PC-9 (cell line): ENCODE measurements at regions of chr11 and their contacts with region 1.

Region 1: DNA sequence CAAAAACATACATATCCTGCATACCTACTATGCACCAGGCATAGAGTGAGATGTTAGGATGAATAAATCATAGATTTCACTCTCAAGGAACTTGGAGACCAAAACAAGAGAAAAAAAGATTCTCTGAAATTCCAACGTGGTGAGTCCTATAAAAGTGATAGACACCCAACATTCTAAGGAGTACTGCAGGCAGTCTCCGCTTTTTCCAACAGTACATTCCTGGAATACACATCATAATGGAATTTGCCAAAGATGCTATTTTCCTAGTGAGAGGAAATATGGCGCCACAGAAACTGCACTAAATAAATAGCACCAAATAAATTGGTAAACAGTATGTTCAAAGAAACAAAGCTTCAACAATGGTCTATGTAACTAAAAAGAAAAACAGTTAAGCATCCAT is 6.0 kb downstream of the TMEM123 start:
- DNase-seq: no peak
- H3K4me3 ChIP-seq: no peak overlapping the region
- H3K27ac ChIP-seq: 0 out of 2 replicates have a peak overlapping the region, but pooled peaks have one; percentile 1
- H3K4me1 ChIP-seq: peaks cover 25% of the 10 kb centered on the region
- H3K27me3 ChIP-seq: no peaks in the 10 kb centered on the region
- CTCF ChIP-seq: no peak

Region 2: DNA sequence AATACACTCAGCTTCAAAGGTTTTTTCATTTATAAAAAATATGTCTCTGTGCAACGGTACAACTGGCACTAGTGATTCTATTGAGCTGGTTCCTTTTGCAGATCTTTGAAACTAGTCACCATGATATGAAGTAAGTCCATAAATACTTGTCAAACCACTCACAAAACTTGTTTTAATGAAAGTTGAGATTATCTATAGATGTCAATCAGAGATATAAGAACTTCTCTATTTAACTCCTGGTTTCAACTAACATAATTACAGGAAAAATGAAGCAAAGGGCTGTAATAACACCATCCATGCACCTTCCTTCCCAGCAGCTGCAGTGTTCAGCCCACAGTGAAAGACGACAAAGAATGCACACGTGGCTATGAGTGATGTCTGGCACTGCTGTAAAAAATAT is 38.7 kb before region 1 on chr11:
- CTCF ChIA-PET with region 1: no interaction called
- POLR2A ChIA-PET with region 1: interaction called, 6 read pairs
- intact Hi-C with region 1: loop called (anchors 1 kb)
- DNase-seq: peak in 1 of 2 experiments; percentile 74
- H3K4me3 ChIP-seq: no peak overlapping the region
- H3K27ac ChIP-seq: peak overlapping the region; percentile 47
- H3K4me1 ChIP-seq: peaks cover 13% of the 10 kb centered on the region
- H3K27me3 ChIP-seq: no peaks in the 10 kb centered on the region
- CTCF ChIP-seq: no peak

Region 3: GRCh38 chr11:103364687-103365086 is 918.1 kb after region 1 on chr11:
- CTCF ChIA-PET with region 1: no interaction called
- POLR2A ChIA-PET with region 1: no interaction called
- intact Hi-C with region 1: no loop called
- DNase-seq: no peak
- H3K4me3 ChIP-seq: no peak overlapping the region
- H3K27ac ChIP-seq: no peak overlapping the region
- H3K4me1 ChIP-seq: no peaks in the 10 kb centered on the region
- H3K27me3 ChIP-seq: no peaks in the 10 kb centered on the region
- CTCF ChIP-seq: no peak